ENCODE measurements at regions of chr17 and their contacts with region 1.

Region 1: DNA sequence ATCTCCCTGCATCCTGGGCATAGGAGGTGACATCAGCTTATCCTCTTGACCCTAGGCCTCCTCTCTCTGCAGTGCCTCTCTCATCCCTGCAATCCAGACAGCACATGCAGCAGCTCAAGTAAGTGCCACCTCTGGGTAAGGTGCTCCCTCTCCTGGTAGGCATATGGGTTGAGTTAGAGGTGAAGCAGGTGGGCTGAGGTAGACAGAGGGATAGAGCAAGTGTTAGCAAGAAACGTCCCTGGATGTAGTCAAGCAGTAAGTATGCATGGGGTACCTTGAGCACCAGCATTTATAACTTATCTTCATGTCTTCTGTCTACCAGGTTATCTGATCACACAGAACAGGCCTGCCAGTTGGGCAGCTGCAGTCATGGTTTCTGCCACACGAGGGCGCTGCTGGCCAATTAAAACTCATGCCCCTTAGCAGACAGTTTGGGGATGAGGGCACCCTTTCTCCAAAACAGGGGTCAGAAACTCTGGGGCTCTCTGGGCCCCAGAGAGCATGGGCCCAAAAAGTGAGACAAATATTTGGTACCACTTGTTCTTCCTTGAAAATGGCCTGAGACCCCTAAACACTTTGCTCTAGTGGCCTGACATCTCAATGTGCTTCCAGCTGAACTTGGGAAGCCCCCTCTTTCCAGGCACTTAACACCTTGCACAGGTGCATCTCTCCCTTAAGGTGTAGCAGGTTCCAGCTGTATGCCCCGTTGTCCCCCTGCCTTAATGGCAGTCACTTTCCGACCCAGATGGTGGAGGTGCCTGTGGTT is 59.8 kb downstream of the NEUROD2 start:
- DNase-seq: peak; percentile 56

Region 2: GRCh38 chr17:39473310-39473709 is 74.6 kb before region 1 on chr17:
- in situ Hi-C with region 1: no loop called
- DNase-seq: no peak

Region 3: GRCh38 chr17:39687811-39688518 is 140.1 kb after region 1 on chr17 and contains the start of gene PGAP3:
- in situ Hi-C with region 1: loop called (anchors 25 kb)
- DNase-seq: peak; percentile 96
- total RNA-seq, gene PGAP3: 5.4 and 13.1 TPM in 2 replicates